GM10248 (cell line): ENCODE measurements at regions of chr14 and their contacts with region 1.

Region 1: DNA sequence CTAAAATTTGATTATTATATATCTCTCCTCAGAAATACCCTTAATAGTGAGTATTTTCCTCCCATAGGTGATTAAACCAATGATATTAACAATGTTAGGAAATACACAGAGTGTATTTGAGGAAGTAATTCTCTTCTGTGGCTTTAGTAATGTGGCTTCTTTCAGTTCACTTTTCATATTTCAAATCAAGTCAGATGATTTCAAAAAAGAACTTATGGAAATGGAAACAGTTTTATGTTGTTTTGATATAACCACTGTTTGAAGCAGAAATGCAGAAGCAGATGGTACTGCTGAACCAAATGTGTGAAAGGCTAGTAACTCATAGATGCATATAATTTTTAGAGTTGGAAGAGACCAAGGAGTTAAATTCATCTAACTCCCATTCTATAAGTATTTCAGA is 1.9 kb upstream of the GPR33 start:
- DNase-seq: peak; percentile 34
- CTCF ChIP-seq: no peak

Region 2: GRCh38 chr14:31510222-31510621 is 20.5 kb after region 1 on chr14:
- CTCF ChIA-PET with region 1: interaction called, 15 read pairs
- POLR2A ChIA-PET with region 1: no interaction called
- DNase-seq: peak; percentile 23
- CTCF ChIP-seq: peak; percentile 48